Right ventricle myocardium inferior (tissue), 1 donor: ENCODE measurements at regions of chr1 and their contacts with region 1.

Region 1: DNA sequence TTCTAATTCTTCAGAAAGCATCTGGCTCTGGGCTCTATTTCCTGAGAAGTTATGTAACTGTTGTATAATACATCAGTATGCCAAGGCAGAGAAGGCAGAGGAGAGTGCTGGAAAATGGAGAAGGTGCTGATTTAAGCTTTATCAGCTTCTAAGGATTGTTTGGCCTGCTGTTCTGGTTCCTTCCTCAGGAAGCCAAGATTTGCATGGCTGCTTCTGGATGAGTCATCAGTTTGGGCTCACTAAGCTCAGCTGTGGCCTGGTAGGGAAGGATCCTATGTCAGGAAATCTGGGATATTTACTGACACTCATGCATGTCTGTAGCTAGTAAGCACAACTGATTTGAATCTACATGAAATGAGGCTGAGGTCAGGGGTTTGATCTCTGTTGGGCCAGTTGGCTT is 73.2 kb upstream of the ADGRL4 start:
- DNase-seq: no peak
- ATAC-seq: peak; percentile 72

Region 2: GRCh38 chr1:79006564-79006963 is 73.2 kb before region 1 on chr1 and contains the start of gene ADGRL4:
- intact Hi-C with region 1: loop called (anchors 5 kb)
- DNase-seq: peak; percentile 44
- ATAC-seq: peak; percentile 68
- total RNA-seq, gene ADGRL4: 25.3 TPM

Region 3: DNA sequence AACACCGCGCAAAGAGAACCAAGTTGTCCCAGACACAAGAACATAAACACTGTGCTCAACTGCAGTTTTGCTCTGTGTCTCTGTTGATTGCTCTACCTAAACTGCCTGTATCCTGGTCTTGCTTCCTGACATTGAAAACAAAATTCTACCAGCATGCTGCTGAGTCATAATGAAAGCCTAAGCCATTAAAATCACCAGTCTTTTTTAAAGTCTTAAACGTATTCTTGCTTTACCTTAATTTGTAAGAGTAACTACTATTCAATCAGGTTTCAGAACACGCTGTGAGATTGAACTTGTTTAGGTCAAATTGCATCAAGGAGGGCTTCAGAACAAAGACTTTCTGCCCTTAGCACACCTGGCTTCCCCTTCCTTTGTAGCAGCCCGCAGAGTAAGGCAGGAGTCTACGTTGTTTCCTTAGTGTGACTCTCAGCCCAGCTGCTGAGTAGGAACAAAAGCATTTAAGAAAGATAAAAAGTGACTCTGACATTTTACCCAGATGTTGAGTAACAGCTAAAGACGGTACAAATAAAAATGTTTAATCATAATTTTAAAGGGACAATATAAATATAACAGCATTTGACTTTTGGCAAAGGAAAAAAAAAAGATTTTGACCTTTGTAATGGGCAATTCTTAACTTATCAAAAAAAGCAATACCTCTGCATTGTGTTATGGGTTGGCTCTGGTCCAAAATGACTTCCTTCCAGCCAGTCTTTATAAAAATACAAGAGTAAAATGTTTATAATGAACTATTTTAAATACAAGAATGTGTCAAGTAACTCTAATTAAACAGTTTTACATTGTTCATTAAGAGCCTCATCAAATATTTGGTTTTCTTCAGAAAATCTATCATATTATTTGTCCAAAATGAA is 113.7 kb after region 1 on chr1:
- intact Hi-C with region 1: loop called (anchors 10 kb)
- DNase-seq: no peak
- ATAC-seq: no peak